ENCODE measurements at regions of chr7 and their contacts with region 1.

Region 1: DNA sequence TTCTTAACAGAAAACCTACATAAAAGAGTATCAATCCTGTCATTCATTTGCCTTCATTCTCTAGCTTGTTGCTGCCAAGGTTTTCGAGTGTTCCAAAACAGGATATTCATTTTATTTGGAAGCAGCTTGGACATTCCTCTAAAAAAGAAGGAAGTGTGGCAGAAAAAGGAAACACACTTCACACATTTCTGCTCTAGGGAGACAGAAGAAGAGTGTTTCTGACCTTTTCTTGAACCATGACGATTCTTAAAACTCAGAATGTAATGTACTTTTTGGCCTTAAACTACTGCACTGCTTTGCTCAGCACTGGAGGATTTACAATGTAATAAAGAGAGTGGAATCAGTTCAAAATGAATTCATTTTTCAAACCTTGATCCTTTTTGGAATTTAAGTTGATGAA is 81.3 kb downstream of the SEMA3A start:
- DNase-seq: no peak
- H3K4me3 ChIP-seq: no peak overlapping the region
- H3K27ac ChIP-seq: peak overlapping the region; percentile 5 to 53 (median 46)
- H3K4me1 ChIP-seq: peaks cover 0 to 43% (median 18%) of the 10 kb centered on the region in 4 donors
- H3K27me3 ChIP-seq: no peaks in the 10 kb centered on the region
- CTCF ChIP-seq: no peak
- EP300 ChIP-seq: no peak
- POLR2A ChIP-seq: no peak

Region 2: GRCh38 chr7:83921941-83922607 is 191.2 kb before region 1 on chr7:
- intact Hi-C with region 1: no loop called
- DNase-seq: no peak
- H3K4me3 ChIP-seq: no peak overlapping the region
- H3K27ac ChIP-seq: no peak overlapping the region
- H3K4me1 ChIP-seq: no peaks in the 10 kb centered on the region
- H3K27me3 ChIP-seq: no peaks in the 10 kb centered on the region
- CTCF ChIP-seq: no peak
- EP300 ChIP-seq: no peak
- POLR2A ChIP-seq: no peak

Region 3: GRCh38 chr7:84073186-84073875 is 40.0 kb before region 1 on chr7:
- intact Hi-C with region 1: no loop called
- DNase-seq: no peak
- H3K4me3 ChIP-seq: no peak overlapping the region
- H3K27ac ChIP-seq: peak overlapping the region in 1 of 4 donors; percentile 18
- H3K4me1 ChIP-seq: peaks cover 0 to 26% (median 5%) of the 10 kb centered on the region in 4 donors
- H3K27me3 ChIP-seq: no peaks in the 10 kb centered on the region
- CTCF ChIP-seq: no peak
- EP300 ChIP-seq: no peak
- POLR2A ChIP-seq: no peak

Region 4: GRCh38 chr7:84176716-84177115 is 63.4 kb after region 1 on chr7:
- intact Hi-C with region 1: loop called (anchors 10 kb)
- DNase-seq: no peak
- H3K4me3 ChIP-seq: no peak overlapping the region
- H3K27ac ChIP-seq: peak overlapping the region in 3 of 4 donors; percentile 35 to 70 (median 68)
- H3K4me1 ChIP-seq: peaks cover 0 to 48% (median 31%) of the 10 kb centered on the region in 4 donors
- H3K27me3 ChIP-seq: no peaks in the 10 kb centered on the region
- CTCF ChIP-seq: no peak
- EP300 ChIP-seq: peak in 2 of 4 donors; percentile 12 to 38
- POLR2A ChIP-seq: no peak